IMR-90 (cell line): ENCODE measurements at regions of chr11 and their contacts with region 1.

Region 1: GRCh38 chr11:9170450-9170849 is 79.1 kb upstream of the SCUBE2 start:
- DNase-seq: peak; percentile 82
- ATAC-seq: peak; percentile 95
- H3K4me3 ChIP-seq: no peak overlapping the region
- H3K27ac ChIP-seq: no peak overlapping the region
- H3K4me1 ChIP-seq: peaks cover 9% of the 10 kb centered on the region; the same call in 1 of the 2 replicates
- H3K27me3 ChIP-seq: no peaks in the 10 kb centered on the region
- CTCF ChIP-seq: no peak
- POLR2A ChIP-seq: no peak
- RAD21 ChIP-seq: no peak

Region 2: GRCh38 chr11:8989453-8989852 is 181.0 kb before region 1 on chr11:
- CTCF ChIA-PET with region 1: no interaction called
- POLR2A ChIA-PET with region 1: no interaction called
- dilution Hi-C with region 1: no loop called
- in situ Hi-C with region 1: no loop called
- intact Hi-C with region 1: no loop called
- DNase-seq: peak; percentile 57
- ATAC-seq: peak; percentile 79
- H3K4me3 ChIP-seq: no peak overlapping the region
- H3K27ac ChIP-seq: no peak overlapping the region
- H3K4me1 ChIP-seq: peaks cover 5% of the 10 kb centered on the region
- H3K27me3 ChIP-seq: no peaks in the 10 kb centered on the region
- CTCF ChIP-seq: no peak
- POLR2A ChIP-seq: no peak
- RAD21 ChIP-seq: no peak

Region 3: GRCh38 chr11:9314291-9315036 is 144.0 kb after region 1 on chr11 and contains the start of gene TMEM41B:
- CTCF ChIA-PET with region 1: no interaction called
- POLR2A ChIA-PET with region 1: no interaction called
- dilution Hi-C with region 1: no loop called
- in situ Hi-C with region 1: no loop called
- intact Hi-C with region 1: loop called (anchors 5 kb)
- DNase-seq: peak; percentile 98
- ATAC-seq: peak; percentile 99
- H3K4me3 ChIP-seq: peak within 1 kb of the TSS; percentile 59
- H3K27ac ChIP-seq: peak within 1 kb of the TSS; percentile 83
- H3K4me1 ChIP-seq: peaks cover 4% of the 10 kb centered on the region
- H3K27me3 ChIP-seq: no peaks in the 10 kb centered on the region
- CTCF ChIP-seq: peak; percentile 21; the same call in 1 of the 2 replicates
- POLR2A ChIP-seq: peak; percentile 82
- RAD21 ChIP-seq: peak; percentile 25; the same call in 1 of the 2 replicates
- total RNA-seq, gene TMEM41B: 20.8 and 36.7 TPM in 2 replicates

Region 4: DNA sequence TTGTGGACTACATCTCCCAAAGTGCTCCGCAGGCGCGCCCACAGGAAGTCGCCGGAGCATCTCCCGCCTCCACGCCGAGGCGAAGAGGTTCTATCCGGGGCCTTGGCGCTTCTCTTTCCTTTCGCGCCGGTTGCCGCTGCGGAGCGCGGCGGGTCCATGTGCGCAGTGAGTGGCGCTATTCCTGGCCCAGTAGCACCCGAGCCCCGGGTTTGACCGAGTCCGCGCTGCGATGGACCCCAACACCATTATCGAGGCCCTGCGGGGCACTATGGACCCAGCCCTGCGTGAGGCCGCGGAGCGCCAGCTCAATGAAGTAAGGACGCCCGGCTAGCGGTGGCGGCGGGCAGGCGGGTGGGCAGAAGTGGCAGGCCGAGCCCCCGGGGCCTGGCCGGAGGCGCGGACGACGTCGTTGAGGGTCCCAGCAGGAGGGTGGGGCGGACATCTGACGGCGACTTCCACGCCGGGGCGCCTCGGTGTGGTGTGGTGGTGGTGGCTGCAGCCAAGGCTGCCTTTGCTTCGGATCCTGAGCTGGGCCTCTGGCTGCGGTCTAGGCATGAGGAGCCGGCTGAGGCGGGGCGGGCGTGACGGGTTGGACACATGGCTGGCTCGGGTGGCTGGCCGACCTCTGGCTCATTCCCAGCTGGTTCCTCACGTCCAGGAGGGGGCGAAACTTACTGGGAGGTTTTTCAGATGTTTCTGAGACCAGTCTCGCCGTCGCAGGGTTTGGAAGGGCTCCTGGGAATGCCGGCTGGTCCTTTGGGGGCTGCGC is 214.3 kb after region 1 on chr11 and contains the start of gene IPO7:
- CTCF ChIA-PET with region 1: no interaction called
- POLR2A ChIA-PET with region 1: no interaction called
- dilution Hi-C with region 1: no loop called
- in situ Hi-C with region 1: no loop called
- intact Hi-C with region 1: loop called (anchors 10 kb)
- DNase-seq: peak; percentile 92
- ATAC-seq: peak; percentile 92
- H3K4me3 ChIP-seq: peak within 1 kb of the TSS; percentile 73
- H3K27ac ChIP-seq: peak within 1 kb of the TSS; percentile 80
- H3K4me1 ChIP-seq: no peaks in the 10 kb centered on the region; the same call in 1 of the 2 replicates
- H3K27me3 ChIP-seq: no peaks in the 10 kb centered on the region
- CTCF ChIP-seq: peak; percentile 47
- POLR2A ChIP-seq: peak; percentile 93
- RAD21 ChIP-seq: peak; percentile 28
- total RNA-seq, gene IPO7: 110 and 124 TPM in 2 replicates

Region 5: DNA sequence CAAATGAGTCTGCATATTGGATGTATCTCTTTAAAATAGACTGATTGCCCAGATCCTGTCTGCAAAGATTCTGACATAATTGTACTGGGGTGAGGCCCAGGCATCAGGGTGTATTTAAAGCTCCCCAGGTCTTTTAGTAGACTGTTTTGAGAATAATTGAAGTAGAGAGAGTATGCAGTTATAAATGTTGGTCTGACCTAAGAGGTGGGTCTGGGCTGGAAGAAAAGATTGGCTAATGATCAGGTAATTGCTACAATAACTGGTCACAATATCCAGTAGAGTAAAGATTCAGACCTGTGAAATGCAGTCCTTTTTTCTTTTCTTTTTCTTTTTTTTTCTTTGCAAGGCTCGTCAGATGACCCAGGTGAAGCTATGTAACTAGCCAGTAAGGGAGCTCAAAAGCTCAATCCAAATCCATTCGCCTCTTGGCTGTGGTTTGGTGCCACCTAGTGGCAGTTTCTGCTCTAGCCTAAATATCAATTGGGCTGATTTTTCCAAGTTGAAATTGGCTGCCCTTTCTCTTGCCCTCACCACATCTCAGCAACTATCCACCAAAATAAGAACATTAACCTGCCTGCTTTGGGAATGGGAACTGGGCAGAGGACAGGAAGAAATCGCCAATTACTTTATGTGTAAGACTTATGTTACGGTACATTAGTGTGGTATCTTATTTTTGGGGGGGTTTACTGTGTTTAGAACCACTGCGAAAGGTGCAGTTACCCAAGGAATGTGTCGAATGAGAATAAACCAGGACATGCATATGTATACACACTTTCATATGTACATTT is 336.2 kb after region 1 on chr11:
- CTCF ChIA-PET with region 1: no interaction called
- POLR2A ChIA-PET with region 1: no interaction called
- dilution Hi-C with region 1: no loop called
- in situ Hi-C with region 1: no loop called
- intact Hi-C with region 1: loop called (anchors 5 kb)
- DNase-seq: peak; percentile 81
- ATAC-seq: peak; percentile 90
- H3K4me3 ChIP-seq: no peak overlapping the region
- H3K27ac ChIP-seq: no peak overlapping the region
- H3K4me1 ChIP-seq: peaks cover 4% of the 10 kb centered on the region
- H3K27me3 ChIP-seq: no peaks in the 10 kb centered on the region
- CTCF ChIP-seq: peak; percentile 95
- POLR2A ChIP-seq: no peak
- RAD21 ChIP-seq: peak; percentile 95